ENCODE measurements at regions of chr3 and their contacts with region 1.

Region 1: GRCh38 chr3:124351430-124352148 is 359.7 kb upstream of the ROPN1 start:
- DNase-seq: peak; percentile 19
- H3K4me3 ChIP-seq: no peak overlapping the region
- H3K27ac ChIP-seq: no peak overlapping the region
- H3K4me1 ChIP-seq: no peaks in the 10 kb centered on the region
- H3K27me3 ChIP-seq: no peaks in the 10 kb centered on the region
- CTCF ChIP-seq: peak; percentile 23 to 73 (median 63)
- POLR2A ChIP-seq: no peak

Region 2: GRCh38 chr3:124026516-124026915 is 325.1 kb before region 1 on chr3:
- intact Hi-C with region 1: loop called (anchors 10 kb)
- DNase-seq: no peak
- H3K4me3 ChIP-seq: no peak overlapping the region
- H3K27ac ChIP-seq: no peak overlapping the region
- H3K4me1 ChIP-seq: no peaks in the 10 kb centered on the region
- H3K27me3 ChIP-seq: no peaks in the 10 kb centered on the region
- CTCF ChIP-seq: no peak
- POLR2A ChIP-seq: no peak

Region 3: GRCh38 chr3:124298726-124299350 is 52.8 kb before region 1 on chr3:
- intact Hi-C with region 1: no loop called
- DNase-seq: no peak
- H3K4me3 ChIP-seq: no peak overlapping the region
- H3K27ac ChIP-seq: no peak overlapping the region
- H3K4me1 ChIP-seq: no peaks in the 10 kb centered on the region
- H3K27me3 ChIP-seq: no peaks in the 10 kb centered on the region
- CTCF ChIP-seq: no peak
- POLR2A ChIP-seq: no peak

Region 4: DNA sequence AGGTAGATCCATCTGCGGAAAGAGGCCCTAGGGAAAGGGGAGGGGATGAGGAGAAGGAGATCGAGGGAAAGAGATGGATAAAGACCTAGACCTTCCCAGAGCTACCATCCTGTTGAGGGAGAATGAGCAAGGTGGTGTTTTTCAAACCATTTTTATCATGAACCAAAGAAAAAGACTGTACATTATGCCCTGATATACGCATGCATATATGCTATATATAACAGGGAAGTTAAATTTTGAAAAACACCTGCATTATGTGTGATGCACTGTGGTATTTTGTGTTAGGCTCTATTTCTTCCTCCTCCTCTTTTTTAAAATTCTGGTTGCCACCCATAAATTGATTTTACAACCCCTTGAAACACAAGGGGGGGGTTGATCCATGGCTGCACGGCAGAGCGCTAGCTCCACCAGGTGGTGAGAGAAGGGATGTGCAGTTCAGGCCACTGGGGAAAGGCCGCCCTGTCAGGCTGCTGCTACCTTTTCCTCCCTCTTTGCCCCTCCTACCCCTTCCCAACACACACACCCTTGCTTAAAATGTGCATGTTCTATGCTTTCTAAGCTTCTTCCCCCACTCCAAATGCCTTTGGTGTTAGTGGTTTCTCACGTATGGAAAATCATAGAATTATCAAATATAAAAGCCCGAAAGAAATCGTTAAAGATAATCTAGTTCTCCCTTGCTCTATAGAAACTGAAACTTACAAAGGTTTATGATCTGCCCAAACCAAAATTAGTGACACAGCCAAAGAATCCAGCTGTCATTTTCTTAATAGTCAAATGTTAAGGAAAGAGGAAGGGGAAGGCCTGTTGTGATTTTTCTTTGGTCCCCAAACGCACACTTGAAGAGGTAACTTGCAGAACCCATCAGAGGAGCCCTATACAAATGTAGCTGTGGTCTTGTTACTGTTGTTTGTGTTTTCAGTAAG is 116.7 kb after region 1 on chr3:
- intact Hi-C with region 1: loop called (anchors 2 kb)
- DNase-seq: peak; percentile 17
- H3K4me3 ChIP-seq: no peak overlapping the region
- H3K27ac ChIP-seq: no peak overlapping the region
- H3K4me1 ChIP-seq: no peaks in the 10 kb centered on the region
- H3K27me3 ChIP-seq: no peaks in the 10 kb centered on the region
- CTCF ChIP-seq: peak; percentile 86 to 90 (median 88)
- POLR2A ChIP-seq: no peak

Measured in prostate gland (tissue), 2 donors.